PC-9 (cell line): ENCODE measurements at regions of chr2 and their contacts with region 1.

Region 1: DNA sequence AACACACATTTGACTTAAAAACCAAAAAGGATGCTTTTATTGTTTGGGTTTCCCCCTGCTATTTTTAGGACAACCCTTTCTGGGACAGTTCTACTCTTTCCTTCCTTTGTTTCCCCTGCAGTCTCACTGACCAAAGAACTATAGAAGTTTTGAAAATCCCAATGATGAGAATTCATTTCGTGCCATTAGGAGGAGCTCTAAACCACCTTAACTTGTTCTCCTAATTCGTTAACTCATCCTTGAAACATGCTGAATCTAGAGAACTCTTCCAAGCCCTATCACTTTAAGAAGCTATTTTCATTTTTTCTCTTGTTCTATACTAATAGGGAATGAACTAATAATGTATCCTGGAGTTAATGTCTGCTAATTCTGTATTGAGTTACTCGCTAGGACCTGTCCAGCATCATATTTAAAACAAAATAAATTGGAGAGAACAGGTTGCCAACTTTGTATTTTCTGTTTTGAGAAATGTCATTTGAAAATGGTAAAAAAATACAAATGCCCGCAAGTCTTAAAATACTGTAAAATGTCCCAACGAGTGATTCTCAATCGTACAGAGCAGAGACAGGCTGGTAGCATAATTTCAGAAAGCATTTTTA is 62.9 kb downstream of the AFTPH start:
- DNase-seq: peak in 1 of 2 experiments; percentile 49
- H3K4me3 ChIP-seq: no peak overlapping the region
- H3K27ac ChIP-seq: no peak overlapping the region
- H3K4me1 ChIP-seq: no peaks in the 10 kb centered on the region
- H3K27me3 ChIP-seq: no peaks in the 10 kb centered on the region
- CTCF ChIP-seq: peak; percentile 88

Region 2: DNA sequence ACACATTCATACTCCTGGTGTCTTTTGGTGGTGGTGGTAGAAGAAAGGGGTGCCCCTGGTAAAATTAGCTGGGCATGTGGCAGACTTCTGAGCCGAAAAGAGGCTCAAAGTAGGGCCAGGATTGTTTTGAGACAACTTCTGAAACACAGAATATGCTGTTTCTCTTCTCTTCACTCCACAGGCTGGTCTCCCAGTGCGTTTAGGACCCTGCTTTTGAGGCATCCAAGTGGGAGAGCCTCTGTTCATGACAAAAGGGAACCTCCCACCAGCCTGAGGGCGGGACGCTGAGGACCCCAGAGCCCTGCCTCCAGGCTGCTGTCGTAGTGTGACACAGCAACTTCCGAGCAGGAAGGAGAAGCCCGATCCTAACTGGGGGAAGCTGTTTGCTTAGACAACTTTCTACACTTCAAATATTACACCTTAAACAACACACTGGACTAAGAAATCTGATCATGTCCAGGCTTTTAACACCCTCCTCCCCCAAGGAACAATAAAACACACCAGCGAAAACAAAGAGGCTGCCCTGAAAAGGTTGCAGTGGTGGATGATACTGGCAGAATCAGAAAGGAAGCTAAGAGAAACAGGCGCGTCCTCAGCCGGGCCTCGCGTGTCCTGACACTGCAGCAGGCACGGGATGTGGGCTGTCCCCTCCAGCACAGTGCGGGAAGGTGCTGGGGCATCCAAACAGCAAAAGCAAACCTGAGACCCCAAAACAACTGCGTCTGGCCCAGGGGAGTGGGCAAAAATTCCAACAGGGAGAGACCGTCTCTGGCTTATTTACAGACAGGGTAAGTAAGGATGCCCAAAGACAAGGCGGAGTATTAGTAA is 57.4 kb after region 1 on chr2:
- CTCF ChIA-PET with region 1: interaction called, 5 read pairs
- POLR2A ChIA-PET with region 1: interaction called, 6 read pairs
- intact Hi-C with region 1: loop called (anchors 1 kb)
- DNase-seq: peak; percentile 83 to 85
- H3K4me3 ChIP-seq: peak overlapping the region; percentile 60
- H3K27ac ChIP-seq: peak overlapping the region; percentile 97
- H3K4me1 ChIP-seq: peaks cover 78% of the 10 kb centered on the region
- H3K27me3 ChIP-seq: no peaks in the 10 kb centered on the region
- CTCF ChIP-seq: no peak

Region 3: DNA sequence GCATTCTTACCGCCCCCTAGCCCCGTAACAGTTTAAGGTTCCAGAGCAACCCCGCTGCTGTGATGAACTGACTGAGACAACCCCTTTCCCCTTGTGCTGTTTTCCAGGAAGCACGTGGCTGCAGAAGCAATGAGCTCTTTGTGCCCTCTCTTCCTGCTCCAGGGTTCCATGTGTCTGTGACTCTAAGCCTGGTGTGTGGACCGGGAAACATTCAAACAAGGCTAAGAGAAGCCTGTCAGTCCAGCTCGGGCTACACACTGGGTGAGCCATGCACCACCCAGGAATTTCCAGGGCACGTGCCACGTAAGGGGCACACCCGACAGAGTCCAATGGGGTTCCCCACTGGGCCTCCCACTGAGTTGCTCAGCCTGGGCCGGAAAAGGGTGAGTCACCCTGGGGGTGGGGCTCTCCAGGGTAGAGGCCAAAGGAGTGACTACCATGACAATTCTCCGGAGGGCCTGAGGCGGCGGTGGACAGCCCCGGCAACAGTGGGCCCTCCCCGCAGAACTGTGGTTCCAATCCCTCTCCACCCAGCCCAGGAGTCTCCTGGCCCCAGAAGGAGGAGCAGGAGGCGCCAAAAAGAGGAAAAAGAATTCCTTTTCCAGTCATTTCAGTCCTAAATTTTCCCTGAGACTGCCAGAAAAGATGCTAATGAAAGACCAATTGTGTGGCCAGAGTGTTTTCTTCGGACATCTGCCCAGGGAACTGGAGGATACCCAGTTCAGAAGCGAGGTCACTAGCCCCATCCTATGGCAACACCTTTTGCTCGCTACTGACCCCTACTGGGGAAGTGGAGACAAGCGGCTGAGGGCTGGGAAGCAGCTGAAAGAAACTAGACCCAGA is 244.4 kb after region 1 on chr2:
- CTCF ChIA-PET with region 1: interaction called, 4 read pairs
- POLR2A ChIA-PET with region 1: no interaction called
- intact Hi-C with region 1: loop called (anchors 1 kb)
- DNase-seq: peak; percentile 99 to 100
- H3K4me3 ChIP-seq: peak overlapping the region; percentile 36; the same call in 1 of the 2 replicates
- H3K27ac ChIP-seq: peak overlapping the region; percentile 83
- H3K4me1 ChIP-seq: peaks cover 53% of the 10 kb centered on the region
- H3K27me3 ChIP-seq: no peaks in the 10 kb centered on the region
- CTCF ChIP-seq: peak; percentile 99

Region 4: DNA sequence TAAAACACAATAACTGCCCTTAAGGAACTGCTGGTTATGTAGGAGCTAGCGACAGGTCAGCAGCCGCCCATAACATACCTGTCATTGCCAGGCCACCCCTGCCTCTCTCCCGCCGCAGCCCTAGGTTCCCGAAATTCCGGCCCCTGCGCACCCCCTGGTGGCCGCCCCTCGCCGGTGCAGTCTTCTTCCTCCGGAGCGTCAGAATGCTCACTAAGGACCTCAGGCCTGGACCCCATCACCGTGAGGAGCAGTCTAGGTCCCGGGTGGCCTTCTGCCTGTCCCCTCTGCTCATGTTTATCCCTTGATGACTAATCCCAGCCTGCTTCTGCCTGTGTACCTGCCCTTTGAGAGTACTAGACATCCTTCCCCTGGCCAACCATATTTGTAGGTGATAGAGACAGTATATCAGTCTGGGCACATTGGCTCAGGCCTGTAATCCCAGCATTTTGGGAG is 286.5 kb after region 1 on chr2:
- CTCF ChIA-PET with region 1: interaction called, 11 read pairs
- POLR2A ChIA-PET with region 1: interaction called, 7 read pairs
- intact Hi-C with region 1: loop called (anchors 2 kb)
- DNase-seq: peak; percentile 66 to 88
- H3K4me3 ChIP-seq: no peak overlapping the region
- H3K27ac ChIP-seq: no peak overlapping the region
- H3K4me1 ChIP-seq: peaks cover 26% of the 10 kb centered on the region
- H3K27me3 ChIP-seq: no peaks in the 10 kb centered on the region
- CTCF ChIP-seq: peak; percentile 99

Region 5: DNA sequence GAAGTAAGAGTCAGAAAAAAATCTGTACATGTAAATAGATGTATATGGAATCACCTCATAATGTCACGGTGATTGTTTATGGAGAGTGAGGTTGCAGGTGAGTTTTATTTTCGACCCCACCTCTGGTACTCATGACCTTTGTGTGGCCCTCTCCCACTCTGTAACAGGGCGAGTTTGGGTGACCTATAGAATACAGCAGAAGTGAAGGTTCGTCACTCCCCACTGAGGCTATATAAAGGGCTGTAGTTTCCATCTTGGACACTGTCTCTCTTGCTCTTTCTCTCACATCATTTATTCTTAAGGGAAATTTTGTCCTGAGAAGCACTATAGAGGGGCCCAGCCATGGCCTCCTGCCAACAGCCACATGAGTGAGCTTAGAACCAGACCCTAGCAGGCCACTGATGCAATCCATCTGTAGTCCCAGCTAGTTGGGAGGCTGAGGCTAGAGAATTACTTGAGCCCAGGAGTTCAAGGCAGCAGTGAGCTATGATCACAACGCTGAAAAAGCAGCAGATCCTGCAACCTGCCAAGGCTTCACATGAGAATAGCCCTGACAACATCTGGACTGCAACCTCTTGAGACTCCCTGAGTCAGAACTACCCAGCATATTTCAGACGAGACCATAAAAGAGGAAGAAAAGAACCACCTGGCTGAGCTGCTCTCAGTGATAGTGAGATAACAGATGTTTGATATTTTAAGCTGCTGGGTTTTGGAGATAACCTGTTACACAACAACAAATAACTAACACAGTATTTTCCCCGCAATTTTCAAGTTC is 327.9 kb after region 1 on chr2:
- CTCF ChIA-PET with region 1: interaction called, 15 read pairs
- POLR2A ChIA-PET with region 1: no interaction called
- intact Hi-C with region 1: loop called (anchors 1 kb)
- DNase-seq: no peak
- H3K4me3 ChIP-seq: no peak overlapping the region
- H3K27ac ChIP-seq: no peak overlapping the region
- H3K4me1 ChIP-seq: no peaks in the 10 kb centered on the region
- H3K27me3 ChIP-seq: no peaks in the 10 kb centered on the region
- CTCF ChIP-seq: no peak